WTC11 (cell line): ENCODE measurements at regions of chr9 and their contacts with region 1.

Region 1: DNA sequence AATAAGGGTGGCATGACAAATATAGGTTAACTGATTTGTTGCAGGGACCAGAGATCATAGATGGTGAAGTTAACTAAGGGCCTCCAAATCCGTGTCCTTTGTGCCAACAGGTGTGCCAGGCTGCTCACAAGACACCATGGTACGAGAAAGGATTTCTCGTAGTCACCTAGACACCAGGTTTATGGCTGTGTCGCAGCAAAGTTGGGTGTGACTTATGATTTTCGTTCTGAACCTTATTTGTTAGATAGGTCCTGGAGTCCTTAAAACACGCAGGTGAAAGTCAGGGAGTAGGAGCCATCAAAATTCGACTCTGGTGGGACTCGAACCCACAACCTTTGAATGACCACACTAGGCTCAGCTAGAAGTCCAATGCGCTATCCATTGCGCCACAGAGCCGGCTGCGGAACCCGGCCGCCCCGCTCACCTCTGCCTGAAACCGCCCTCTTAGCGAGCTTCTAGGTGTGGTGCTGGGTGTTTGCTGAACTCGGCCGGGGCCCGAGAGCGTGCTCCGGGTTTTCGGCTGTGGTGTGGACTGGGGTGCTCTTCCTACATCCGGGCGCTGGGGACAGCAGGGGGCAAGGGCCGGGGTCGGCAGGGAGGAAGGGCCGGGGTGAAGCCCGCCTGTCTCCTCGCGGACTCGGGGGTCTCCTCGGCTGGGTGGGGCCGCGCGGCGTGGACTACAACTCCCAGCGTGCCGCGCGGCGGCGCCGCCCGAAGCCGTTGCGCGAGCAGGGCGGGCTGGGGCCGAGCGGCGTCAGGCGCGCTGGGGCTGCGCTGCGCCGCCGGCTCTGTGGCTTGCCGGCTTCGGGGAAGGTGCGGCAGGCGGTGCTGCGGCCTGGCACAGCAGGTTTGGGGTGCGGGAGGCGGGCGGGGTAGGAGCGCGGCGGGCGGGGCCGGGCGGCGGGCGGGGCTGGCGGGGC is at the start of gene SLC27A4:
- DNase-seq: peak; percentile 91
- ATAC-seq: peak; percentile 85
- H3K4me3 Mint-ChIP-seq: peak within 1 kb of the TSS; percentile 87
- H3K27ac Mint-ChIP-seq: peak within 1 kb of the TSS; percentile 84
- H3K4me1 Mint-ChIP-seq: peaks cover 5% of the 10 kb centered on the region; the same call in 1 of the 2 replicates
- H3K27me3 Mint-ChIP-seq: no peaks in the 10 kb centered on the region
- CTCF ChIP-seq: no peak
- total RNA-seq, gene SLC27A4: 20.8 to 23.8 TPM (median 21.2 TPM) in 3 replicates

Region 2: DNA sequence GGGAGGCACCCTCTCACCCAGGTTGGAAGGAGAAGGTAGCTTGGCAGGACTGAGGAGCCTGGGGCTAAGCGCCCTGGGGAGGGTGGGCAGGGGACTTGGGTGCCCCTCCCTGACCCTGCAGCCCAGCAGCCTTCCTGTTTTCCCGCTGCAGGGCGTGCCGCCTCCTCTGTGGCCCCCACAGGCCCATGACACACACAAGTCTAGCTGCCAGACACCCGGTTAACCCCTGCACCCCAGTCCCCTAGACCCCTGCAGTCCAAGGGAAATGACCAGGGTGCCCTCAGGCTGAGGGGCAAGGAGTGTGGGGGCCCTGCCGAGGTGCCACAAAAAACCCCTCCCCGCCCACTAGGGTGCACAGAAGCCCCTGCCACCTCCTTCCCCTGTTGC is 97.2 kb before region 1 on chr9:
- CTCF ChIA-PET with region 1: no interaction called
- POLR2A ChIA-PET with region 1: no interaction called
- DNase-seq: no peak
- ATAC-seq: no peak
- H3K4me3 Mint-ChIP-seq: no peak overlapping the region
- H3K27ac Mint-ChIP-seq: no peak overlapping the region
- H3K4me1 Mint-ChIP-seq: peaks cover 15% of the 10 kb centered on the region
- H3K27me3 Mint-ChIP-seq: no peaks in the 10 kb centered on the region
- CTCF ChIP-seq: no peak

Region 3: GRCh38 chr9:128296337-128297220 is 43.5 kb before region 1 on chr9:
- CTCF ChIA-PET with region 1: interaction called, 49 read pairs
- POLR2A ChIA-PET with region 1: interaction called, 5 read pairs
- DNase-seq: no peak
- ATAC-seq: no peak
- H3K4me3 Mint-ChIP-seq: no peak overlapping the region
- H3K27ac Mint-ChIP-seq: peak overlapping the region; percentile 23; the same call in 1 of the 2 replicates
- H3K4me1 Mint-ChIP-seq: no peaks in the 10 kb centered on the region
- H3K27me3 Mint-ChIP-seq: peaks cover 2% of the 10 kb centered on the region; the same call in 1 of the 2 replicates
- CTCF ChIP-seq: no peak

Region 4: GRCh38 chr9:128323212-128323730 is 16.8 kb before region 1 on chr9:
- CTCF ChIA-PET with region 1: interaction called, 13 read pairs
- POLR2A ChIA-PET with region 1: no interaction called
- DNase-seq: no peak
- ATAC-seq: no peak
- H3K4me3 Mint-ChIP-seq: peak overlapping the region; percentile 88
- H3K27ac Mint-ChIP-seq: peak overlapping the region; percentile 63
- H3K4me1 Mint-ChIP-seq: 0 out of 2 replicates have a peak, but pooled peaks cover 8% of the 10 kb centered on the region
- H3K27me3 Mint-ChIP-seq: no peaks in the 10 kb centered on the region
- CTCF ChIP-seq: no peak

Region 5: DNA sequence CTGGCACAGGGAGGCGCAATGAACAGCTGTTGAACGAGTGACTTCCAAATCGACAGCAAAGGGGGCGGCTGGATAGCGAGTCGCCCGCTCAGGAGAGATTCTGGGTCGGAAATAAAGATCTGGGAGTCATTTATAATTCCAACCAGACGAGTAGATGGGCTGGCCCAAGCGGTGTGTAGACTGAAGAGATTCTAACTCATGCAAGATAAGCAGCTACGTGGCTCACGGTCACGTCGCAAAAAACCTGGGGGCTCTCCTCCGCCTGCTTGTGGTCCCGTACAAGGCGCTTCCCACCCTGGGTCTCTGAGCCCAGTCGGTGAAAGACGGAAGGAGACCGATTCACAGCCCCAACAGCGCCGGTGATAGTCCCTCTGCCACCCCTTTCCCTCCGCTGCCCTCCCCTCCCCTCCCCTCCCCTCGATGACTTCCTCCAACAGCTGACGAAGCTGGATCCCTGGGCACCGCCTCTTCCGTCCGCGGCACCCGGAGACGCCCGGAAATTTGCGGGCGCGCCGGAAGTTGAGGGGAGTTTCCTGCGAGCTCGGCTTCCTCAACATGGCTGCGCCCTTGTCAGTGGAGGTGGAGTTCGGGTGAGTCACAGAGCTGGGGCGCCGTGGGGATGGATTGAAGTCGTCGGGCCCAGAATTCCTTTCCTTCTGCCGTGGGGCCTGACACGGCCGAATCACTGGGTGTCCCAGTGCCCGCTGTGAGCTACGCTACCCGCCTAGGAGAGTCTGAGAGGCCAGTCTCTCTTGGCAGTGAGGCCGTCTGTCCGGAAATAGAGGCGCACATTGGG is 31.0 kb after region 1 on chr9 and contains the start of gene URM1:
- CTCF ChIA-PET with region 1: interaction called, 49 read pairs
- POLR2A ChIA-PET with region 1: no interaction called
- DNase-seq: peak; percentile 92
- ATAC-seq: peak; percentile 89
- H3K4me3 Mint-ChIP-seq: peak within 1 kb of the TSS; percentile 95
- H3K27ac Mint-ChIP-seq: peak within 1 kb of the TSS; percentile 80
- H3K4me1 Mint-ChIP-seq: peaks cover 26% of the 10 kb centered on the region
- H3K27me3 Mint-ChIP-seq: peaks cover 35% of the 10 kb centered on the region
- CTCF ChIP-seq: no peak
- total RNA-seq, gene URM1: 52.0 to 67.9 TPM (median 54.3 TPM) in 3 replicates

Region 6: DNA sequence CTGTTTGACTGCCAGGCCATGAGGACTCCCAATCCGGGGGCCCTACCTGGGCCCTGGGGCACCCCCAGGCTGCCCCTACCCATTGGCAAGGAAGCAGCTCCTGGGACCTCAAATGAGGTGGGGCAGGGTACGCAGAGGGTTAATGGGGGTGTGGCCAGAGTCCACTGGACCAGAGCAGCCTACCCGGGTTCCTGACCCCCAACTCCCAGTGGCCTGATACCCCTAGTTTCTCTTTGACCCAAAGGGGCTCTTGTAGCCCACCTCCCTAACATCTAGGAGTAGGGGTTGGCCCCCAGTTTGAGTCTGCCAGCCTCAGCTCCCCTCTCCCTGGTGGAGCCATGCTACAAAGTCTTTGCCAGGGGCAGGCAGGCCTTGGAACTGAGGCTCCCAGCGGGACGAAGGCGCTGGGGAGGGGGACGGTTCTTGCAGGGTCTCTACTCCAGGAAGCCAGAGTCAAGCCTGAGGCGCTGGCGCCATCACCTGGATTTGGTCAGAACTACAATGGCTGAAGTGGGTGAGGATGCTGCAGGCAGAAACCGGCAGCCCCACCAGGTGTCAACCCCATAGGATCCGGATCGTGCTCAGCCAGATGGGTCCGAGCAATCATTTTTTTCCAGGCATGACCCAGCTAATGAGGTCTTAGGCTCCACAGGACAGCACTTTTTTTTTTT is 72.2 kb after region 1 on chr9:
- CTCF ChIA-PET with region 1: interaction called, 20 read pairs
- POLR2A ChIA-PET with region 1: no interaction called
- DNase-seq: peak; percentile 99
- ATAC-seq: peak; percentile 81
- H3K4me3 Mint-ChIP-seq: no peak overlapping the region
- H3K27ac Mint-ChIP-seq: no peak overlapping the region
- H3K4me1 Mint-ChIP-seq: peaks cover 42% of the 10 kb centered on the region
- H3K27me3 Mint-ChIP-seq: peaks cover 84% of the 10 kb centered on the region
- CTCF ChIP-seq: peak; percentile 83

Region 7: DNA sequence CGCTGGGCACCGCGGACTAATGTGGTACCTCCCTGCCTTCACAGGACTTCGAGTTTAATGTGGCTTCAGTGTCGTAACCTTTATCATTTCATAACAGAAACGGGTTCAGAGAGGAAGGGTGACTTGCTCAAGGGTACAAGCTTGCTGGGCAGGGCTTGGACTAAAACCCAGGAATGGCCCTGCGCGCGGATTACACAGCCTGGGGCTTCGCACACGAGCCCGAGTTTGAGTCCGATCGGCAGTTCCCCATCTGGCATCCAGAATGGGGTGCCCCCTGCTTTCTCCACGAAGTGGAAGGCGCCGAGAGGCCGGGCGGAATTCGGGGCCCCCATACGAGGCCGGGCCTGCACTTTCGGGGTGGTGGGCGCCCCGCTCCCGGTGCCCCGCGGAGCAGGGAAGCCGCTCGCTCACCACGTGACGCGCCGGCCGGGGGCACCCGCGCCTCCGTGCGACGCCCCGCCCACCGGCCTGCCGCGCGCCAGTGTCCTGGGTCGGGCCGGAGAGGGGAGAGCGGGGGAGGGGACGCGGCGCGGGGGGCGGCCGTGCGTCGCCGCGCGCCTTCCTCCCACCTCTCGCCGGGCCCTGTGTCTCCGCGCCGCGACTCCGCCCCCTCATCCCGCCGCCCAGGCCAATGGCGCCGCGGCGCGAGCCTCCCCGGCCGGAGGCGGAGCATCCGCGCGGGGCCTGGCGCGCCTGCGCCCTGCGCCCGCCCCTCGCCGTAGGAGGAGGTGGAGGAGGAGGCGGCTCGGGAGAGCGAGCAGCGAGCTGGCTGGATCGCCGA is 348.7 kb after region 1 on chr9 and contains the start of gene SET:
- CTCF ChIA-PET with region 1: no interaction called
- POLR2A ChIA-PET with region 1: no interaction called
- DNase-seq: peak; percentile 93
- ATAC-seq: peak; percentile 84
- H3K4me3 Mint-ChIP-seq: peak within 1 kb of the TSS; percentile 96
- H3K27ac Mint-ChIP-seq: peak within 1 kb of the TSS; percentile 98
- H3K4me1 Mint-ChIP-seq: peaks cover 57% of the 10 kb centered on the region
- H3K27me3 Mint-ChIP-seq: no peaks in the 10 kb centered on the region; the same call in 1 of the 2 replicates
- CTCF ChIP-seq: no peak
- total RNA-seq, gene SET: 1,083 to 1,129 TPM (median 1,086 TPM) in 3 replicates